Activated B cell treated with CpG ODN at 0.5 μM for 24 hours (primary cell): ENCODE measurements at regions of chr2 and their contacts with region 1.

Region 1: DNA sequence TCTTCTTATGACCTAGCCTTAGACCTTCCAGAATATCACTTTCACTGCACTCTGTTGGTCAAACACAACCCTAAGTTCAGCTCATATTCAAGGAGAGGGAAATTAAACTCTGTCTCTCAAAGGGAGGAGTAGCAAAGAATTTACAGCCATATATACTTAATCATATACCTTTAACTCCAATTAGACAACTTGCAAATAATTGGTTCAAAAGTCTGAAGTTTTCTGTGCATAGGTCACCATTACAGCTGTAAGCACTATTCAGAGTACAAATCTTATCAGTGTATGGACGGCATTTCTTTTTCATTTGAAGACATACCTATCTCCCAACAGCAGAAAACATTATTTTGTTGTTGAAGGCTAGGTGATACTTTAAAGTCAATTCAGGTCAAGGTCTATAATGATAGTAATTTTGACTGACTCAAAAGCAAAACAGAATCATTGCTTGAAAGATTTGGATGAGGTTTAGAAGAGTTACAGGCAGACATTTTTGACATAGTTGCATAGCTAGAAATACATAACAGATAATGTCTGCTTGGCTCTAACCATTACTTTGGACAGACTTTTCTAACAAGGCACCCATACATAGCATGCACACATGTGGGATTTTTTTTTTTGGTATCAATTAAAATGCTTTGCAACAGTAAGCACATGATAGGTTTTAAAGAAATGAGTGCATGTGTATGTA is 131.5 kb downstream of the CPS1 start:
- DNase-seq: no peak
- ATAC-seq: no peak
- H3K4me3 Mint-ChIP-seq: no peak overlapping the region
- H3K27ac Mint-ChIP-seq: no peak overlapping the region
- H3K4me1 Mint-ChIP-seq: no peaks in the 10 kb centered on the region
- H3K27me3 Mint-ChIP-seq: no peaks in the 10 kb centered on the region
- CTCF ChIP-seq: no peak

Region 2: DNA sequence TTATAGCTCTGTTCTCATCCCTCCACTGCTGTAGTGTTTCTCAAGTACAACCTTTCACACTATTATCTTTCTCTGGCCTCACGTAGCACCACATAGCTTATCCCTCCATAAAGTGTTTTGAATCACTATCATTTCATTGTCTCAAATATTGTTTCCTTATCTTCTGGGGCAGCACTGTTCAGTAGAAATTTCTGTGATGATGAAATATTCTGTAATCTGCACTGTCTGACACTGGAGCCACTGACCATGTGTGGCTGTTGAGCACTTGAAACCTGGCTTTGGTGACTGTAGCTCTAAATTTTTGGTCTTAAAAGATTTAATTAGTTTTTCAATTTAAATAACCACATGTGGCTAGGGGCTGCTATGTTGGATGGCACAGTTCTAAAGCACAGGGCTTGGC is 52.7 kb before region 1 on chr2:
- CTCF ChIA-PET with region 1: no interaction called
- POLR2A ChIA-PET with region 1: no interaction called
- intact Hi-C with region 1: loop called (anchors 2 kb)
- DNase-seq: no peak
- ATAC-seq: no peak
- H3K4me3 Mint-ChIP-seq: no peak overlapping the region
- H3K27ac Mint-ChIP-seq: no peak overlapping the region
- H3K4me1 Mint-ChIP-seq: no peaks in the 10 kb centered on the region
- H3K27me3 Mint-ChIP-seq: peaks cover 2% of the 10 kb centered on the region
- CTCF ChIP-seq: no peak

Region 3: DNA sequence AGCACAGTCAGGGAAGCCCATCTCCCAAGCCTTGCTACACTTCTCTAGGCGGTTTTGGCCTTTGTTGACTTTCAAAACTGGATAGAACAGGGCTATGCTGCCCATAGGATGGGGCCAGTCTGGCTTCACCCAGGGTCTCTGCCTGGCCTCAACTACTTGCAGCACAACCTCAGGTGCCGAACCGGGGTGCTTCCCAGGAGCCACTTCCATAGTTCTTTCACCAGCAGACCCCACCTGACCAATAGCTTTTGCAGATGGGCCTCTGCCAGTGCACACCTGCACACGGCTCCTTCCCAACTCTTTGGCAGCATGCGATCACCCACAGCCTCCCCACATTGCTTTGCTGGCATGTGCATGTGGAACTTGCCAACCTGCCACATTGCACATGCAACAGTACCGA is 200.1 kb after region 1 on chr2:
- CTCF ChIA-PET with region 1: no interaction called
- POLR2A ChIA-PET with region 1: no interaction called
- intact Hi-C with region 1: no loop called
- DNase-seq: no peak
- ATAC-seq: no peak
- H3K4me3 Mint-ChIP-seq: no peak overlapping the region
- H3K27ac Mint-ChIP-seq: no peak overlapping the region
- H3K4me1 Mint-ChIP-seq: no peaks in the 10 kb centered on the region
- H3K27me3 Mint-ChIP-seq: no peaks in the 10 kb centered on the region
- CTCF ChIP-seq: no peak